B cell (primary cell): ENCODE measurements at regions of chr9 and their contacts with region 1.

Region 1: GRCh38 chr9:27386571-27387091 is 89.7 kb upstream of the EQTN start:
- DNase-seq: no peak
- ATAC-seq: no peak
- H3K4me3 ChIP-seq: no peak overlapping the region
- H3K4me3 Mint-ChIP-seq: peak overlapping the region; percentile 34
- H3K27ac ChIP-seq: peak overlapping the region in 1 of 2 donors; percentile 50
- H3K27ac Mint-ChIP-seq: peak overlapping the region; percentile 71
- H3K4me1 ChIP-seq: peaks cover 77% of the 10 kb centered on the region in 2 donors
- H3K4me1 Mint-ChIP-seq: peaks cover 88% of the 10 kb centered on the region
- H3K27me3 ChIP-seq: no peaks in the 10 kb centered on the region
- H3K27me3 Mint-ChIP-seq: no peaks in the 10 kb centered on the region
- CTCF ChIP-seq: no peak

Region 2: DNA sequence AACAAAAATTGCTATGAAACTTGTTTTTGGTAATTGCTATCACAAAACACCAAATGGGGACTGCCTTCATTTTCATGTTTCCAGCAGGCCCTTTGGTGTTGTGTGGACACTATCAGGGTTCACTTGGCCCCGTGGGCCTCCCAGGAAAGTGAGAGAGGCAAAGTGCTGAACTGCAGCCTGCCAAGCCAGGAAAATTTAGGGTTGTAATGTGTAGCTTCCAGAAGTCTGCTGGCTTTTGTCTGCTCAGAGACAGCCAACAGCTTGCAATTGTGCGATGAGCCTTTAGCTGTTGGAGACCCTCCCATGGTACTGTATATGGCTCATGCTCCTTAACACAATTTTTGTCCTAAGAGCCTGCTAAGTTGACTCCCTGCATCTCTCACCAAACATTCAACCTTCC is 16.0 kb after region 1 on chr9:
- CTCF ChIA-PET with region 1: no interaction called
- POLR2A ChIA-PET with region 1: interaction called, 12 read pairs
- intact Hi-C with region 1: no loop called
- DNase-seq: no peak
- ATAC-seq: no peak
- H3K4me3 ChIP-seq: no peak overlapping the region
- H3K4me3 Mint-ChIP-seq: no peak overlapping the region
- H3K27ac ChIP-seq: no peak overlapping the region
- H3K27ac Mint-ChIP-seq: no peak overlapping the region
- H3K4me1 ChIP-seq: peaks cover 27 to 33% of the 10 kb centered on the region in 2 donors
- H3K4me1 Mint-ChIP-seq: peaks cover 55% of the 10 kb centered on the region
- H3K27me3 ChIP-seq: no peaks in the 10 kb centered on the region
- H3K27me3 Mint-ChIP-seq: no peaks in the 10 kb centered on the region
- CTCF ChIP-seq: no peak